Esophagus squamous epithelium (tissue), 5 donors: ENCODE measurements at regions of chr1 and their contacts with region 1.

Region 1: GRCh38 chr1:22527555-22528296 is 35.6 kb upstream of the EPHA8 start:
- DNase-seq: no peak
- H3K4me3 ChIP-seq: no peak overlapping the region
- H3K27ac ChIP-seq: no peak overlapping the region
- H3K4me1 ChIP-seq: peaks cover 0 to 21% (median 6%) of the 10 kb centered on the region in 3 donors
- H3K27me3 ChIP-seq: no peaks in the 10 kb centered on the region
- CTCF ChIP-seq: peak in 1 of 6 experiments; percentile 3
- POLR2A ChIP-seq: no peak

Region 2: GRCh38 chr1:22641906-22642636 is 114.3 kb after region 1 on chr1:
- intact Hi-C with region 1: loop called (anchors 10 kb)
- DNase-seq: no peak
- H3K4me3 ChIP-seq: no peak overlapping the region
- H3K27ac ChIP-seq: no peak overlapping the region
- H3K4me1 ChIP-seq: peaks cover 3 to 9% (median 3%) of the 10 kb centered on the region in 3 donors
- H3K27me3 ChIP-seq: peaks cover 0 to 73% (median 0%) of the 10 kb centered on the region in 4 donors
- CTCF ChIP-seq: peak; percentile 76 to 91 (median 85)
- POLR2A ChIP-seq: no peak

Region 3: GRCh38 chr1:22969304-22969709 is 441.6 kb after region 1 on chr1:
- intact Hi-C with region 1: no loop called
- DNase-seq: no peak
- H3K4me3 ChIP-seq: no peak overlapping the region
- H3K27ac ChIP-seq: no peak overlapping the region
- H3K4me1 ChIP-seq: peaks cover 0 to 13% (median 0%) of the 10 kb centered on the region in 3 donors
- H3K27me3 ChIP-seq: peaks cover 0 to 91% (median 2%) of the 10 kb centered on the region in 4 donors
- CTCF ChIP-seq: no peak
- POLR2A ChIP-seq: no peak